Activated CD4-positive, alpha-beta T cell treated with anti-CD3 and anti-CD28 coated beads, Interleukin-2, amount 10 ng/mL, durations not matched to agents 7 days and 5 days (primary cell): ENCODE measurements at regions of chr4 and their contacts with region 1.

Region 1: GRCh38 chr4:13527981-13528820 is 16.1 kb downstream of the NKX3-2 start:
- DNase-seq: no peak
- H3K4me3 Mint-ChIP-seq: no peak overlapping the region
- H3K27ac Mint-ChIP-seq: peak overlapping the region; percentile 41
- H3K4me1 Mint-ChIP-seq: peaks cover 13% of the 10 kb centered on the region
- H3K27me3 Mint-ChIP-seq: peaks cover 91% of the 10 kb centered on the region

Region 2: GRCh38 chr4:13541720-13542576 is 13.7 kb after region 1 on chr4:
- CTCF ChIA-PET with region 1: interaction called, 10 read pairs
- POLR2A ChIA-PET with region 1: no interaction called
- DNase-seq: peak; percentile 35
- H3K4me3 Mint-ChIP-seq: no peak overlapping the region
- H3K27ac Mint-ChIP-seq: no peak overlapping the region
- H3K4me1 Mint-ChIP-seq: peaks cover 27% of the 10 kb centered on the region
- H3K27me3 Mint-ChIP-seq: peaks cover 81% of the 10 kb centered on the region